ENCODE measurements at regions of chr10 and their contacts with region 1.

Region 1: DNA sequence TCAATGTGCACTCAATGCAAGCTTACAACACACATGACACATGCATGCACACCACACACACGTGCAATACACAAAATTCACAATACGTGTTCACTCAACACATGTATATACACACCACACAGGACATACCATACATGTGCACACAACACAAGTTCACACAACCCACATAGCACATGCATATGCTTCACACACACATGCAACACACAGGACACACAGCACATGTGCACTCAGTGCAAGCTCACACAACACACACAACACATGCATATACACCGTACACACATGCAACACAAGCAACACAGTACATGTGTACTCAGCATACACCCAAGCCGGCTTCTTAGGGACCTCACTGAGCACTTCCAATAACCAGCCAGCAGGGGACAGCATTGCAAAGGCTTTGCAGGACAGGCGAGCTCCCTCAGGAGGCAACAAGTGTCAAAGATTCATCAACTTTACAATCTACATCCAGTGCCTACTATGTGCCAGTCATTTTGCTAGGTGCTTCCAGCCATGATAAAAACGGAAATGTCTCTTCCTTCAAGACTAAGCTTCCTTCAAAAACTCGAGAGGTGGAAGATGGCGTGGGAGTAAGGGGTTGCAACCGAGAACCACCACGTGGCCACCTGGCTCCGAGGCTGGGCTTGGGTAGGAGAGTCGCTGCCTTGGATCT is 61.1 kb downstream of the JCAD start:
- DNase-seq: peak; percentile 74 to 86
- ATAC-seq: peak; percentile 18 to 23
- H3K4me3 ChIP-seq: no peak overlapping the region
- H3K27ac ChIP-seq: peak overlapping the region; percentile 30 to 98 (median 92)
- H3K4me1 ChIP-seq: peaks cover 60 to 66% of the 10 kb centered on the region in 2 donors
- H3K27me3 ChIP-seq: no peaks in the 10 kb centered on the region
- CTCF ChIP-seq: peak; percentile 96 to 99 (median 98)
- POLR2A ChIP-seq: no peak

Region 2: GRCh38 chr10:29857843-29858701 is 140.2 kb before region 1 on chr10:
- in situ Hi-C with region 1: loop called in 1 of 4 experiments (anchors 5 kb)
- intact Hi-C with region 1: loop called (anchors 2 kb)
- DNase-seq: peak; percentile 77 to 89
- ATAC-seq: peak; percentile 70 to 84
- H3K4me3 ChIP-seq: peak overlapping the region in 2 of 4 donors; percentile 5 to 37
- H3K27ac ChIP-seq: peak overlapping the region; percentile 78 to 85 (median 84)
- H3K4me1 ChIP-seq: peaks cover 47 to 49% of the 10 kb centered on the region in 2 donors
- H3K27me3 ChIP-seq: no peaks in the 10 kb centered on the region
- CTCF ChIP-seq: peak; percentile 75 to 85 (median 77)
- POLR2A ChIP-seq: peak in 1 of 2 donors; percentile 41

Region 3: GRCh38 chr10:29969255-29970011 is 28.8 kb before region 1 on chr10:
- in situ Hi-C with region 1: no loop called
- intact Hi-C with region 1: loop called (anchors 1 kb)
- DNase-seq: peak; percentile 86 to 93
- ATAC-seq: peak; percentile 96
- H3K4me3 ChIP-seq: no peak overlapping the region
- H3K27ac ChIP-seq: peak overlapping the region; percentile 81 to 86 (median 82)
- H3K4me1 ChIP-seq: peaks cover 16 to 17% of the 10 kb centered on the region in 2 donors
- H3K27me3 ChIP-seq: no peaks in the 10 kb centered on the region
- CTCF ChIP-seq: no peak
- POLR2A ChIP-seq: peak; percentile 32 to 67

Region 4: GRCh38 chr10:30231071-30231652 is 232.9 kb after region 1 on chr10:
- in situ Hi-C with region 1: loop called in 3 of 4 experiments (anchors 5 to 25 kb)
- intact Hi-C with region 1: no loop called
- DNase-seq: no peak
- ATAC-seq: no peak
- H3K4me3 ChIP-seq: no peak overlapping the region
- H3K27ac ChIP-seq: no peak overlapping the region
- H3K4me1 ChIP-seq: no peaks in the 10 kb centered on the region
- H3K27me3 ChIP-seq: no peaks in the 10 kb centered on the region
- CTCF ChIP-seq: no peak
- POLR2A ChIP-seq: no peak

Region 5: GRCh38 chr10:30348378-30348776 is 350.1 kb after region 1 on chr10:
- in situ Hi-C with region 1: no loop called
- intact Hi-C with region 1: loop called (anchors 5 kb)
- DNase-seq: no peak
- ATAC-seq: peak in 1 of 2 donors; percentile 14
- H3K4me3 ChIP-seq: peak overlapping the region; percentile 69 to 86 (median 79)
- H3K27ac ChIP-seq: peak overlapping the region; percentile 86 to 95 (median 92)
- H3K4me1 ChIP-seq: peaks cover 32 to 38% of the 10 kb centered on the region in 2 donors
- H3K27me3 ChIP-seq: no peaks in the 10 kb centered on the region
- CTCF ChIP-seq: no peak
- POLR2A ChIP-seq: no peak